ENCODE measurements at regions of chr12 and their contacts with region 1.

Region 1: GRCh38 chr12:69879041-69879960 is 54.3 kb downstream of the MYRFL start:
- DNase-seq: peak; percentile 83
- H3K4me3 Mint-ChIP-seq: peak overlapping the region; percentile 60
- H3K27ac Mint-ChIP-seq: no peak overlapping the region
- H3K4me1 Mint-ChIP-seq: peaks cover 7% of the 10 kb centered on the region
- H3K27me3 Mint-ChIP-seq: no peaks in the 10 kb centered on the region
- CTCF ChIP-seq: peak; percentile 94

Region 2: DNA sequence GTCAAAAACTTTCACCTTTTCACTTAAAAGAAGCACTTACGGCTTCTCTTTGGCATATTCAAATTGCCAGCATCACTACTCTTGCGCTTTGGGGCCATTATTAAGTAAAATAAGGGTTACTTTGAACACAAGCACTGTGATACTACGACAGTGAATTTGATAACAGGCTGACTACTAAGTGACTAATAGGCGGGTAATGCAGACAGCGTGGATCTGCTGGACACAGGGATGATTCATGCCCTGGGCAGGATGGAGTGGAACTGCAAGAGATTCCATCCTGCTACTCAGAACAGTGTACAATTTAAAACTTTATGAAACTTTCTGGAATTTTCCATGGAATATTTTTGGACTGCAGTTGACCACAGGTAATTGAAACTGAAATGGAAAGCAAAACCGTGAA is 473.8 kb before region 1 on chr12:
- CTCF ChIA-PET with region 1: no interaction called
- POLR2A ChIA-PET with region 1: no interaction called
- intact Hi-C with region 1: no loop called
- DNase-seq: peak; percentile 84
- H3K4me3 Mint-ChIP-seq: no peak overlapping the region
- H3K27ac Mint-ChIP-seq: peak overlapping the region; percentile 47
- H3K4me1 Mint-ChIP-seq: peaks cover 18% of the 10 kb centered on the region
- H3K27me3 Mint-ChIP-seq: no peaks in the 10 kb centered on the region
- CTCF ChIP-seq: no peak

Region 3: GRCh38 chr12:69821456-69822159 is 57.7 kb before region 1 on chr12:
- CTCF ChIA-PET with region 1: interaction called, 11 read pairs
- POLR2A ChIA-PET with region 1: no interaction called
- intact Hi-C with region 1: no loop called
- DNase-seq: peak; percentile 75
- H3K4me3 Mint-ChIP-seq: peak overlapping the region; percentile 50
- H3K27ac Mint-ChIP-seq: peak overlapping the region; percentile 64
- H3K4me1 Mint-ChIP-seq: peaks cover 15% of the 10 kb centered on the region
- H3K27me3 Mint-ChIP-seq: no peaks in the 10 kb centered on the region
- CTCF ChIP-seq: no peak

Region 4: GRCh38 chr12:69894800-69895383 is 15.6 kb after region 1 on chr12:
- CTCF ChIA-PET with region 1: interaction called, 58 read pairs
- POLR2A ChIA-PET with region 1: interaction called, 4 read pairs
- intact Hi-C with region 1: no loop called
- DNase-seq: no peak
- H3K4me3 Mint-ChIP-seq: no peak overlapping the region
- H3K27ac Mint-ChIP-seq: no peak overlapping the region
- H3K4me1 Mint-ChIP-seq: peaks cover 10% of the 10 kb centered on the region
- H3K27me3 Mint-ChIP-seq: no peaks in the 10 kb centered on the region
- CTCF ChIP-seq: no peak

Region 5: GRCh38 chr12:70719672-70720420 is 840.5 kb after region 1 on chr12:
- CTCF ChIA-PET with region 1: interaction called, 13 read pairs
- POLR2A ChIA-PET with region 1: interaction called, 3 read pairs
- intact Hi-C with region 1: no loop called
- DNase-seq: peak; percentile 28
- H3K4me3 Mint-ChIP-seq: no peak overlapping the region
- H3K27ac Mint-ChIP-seq: no peak overlapping the region
- H3K4me1 Mint-ChIP-seq: no peaks in the 10 kb centered on the region
- H3K27me3 Mint-ChIP-seq: no peaks in the 10 kb centered on the region
- CTCF ChIP-seq: peak; percentile 92

Measured in MCF 10A (cell line).